ENCODE measurements at regions of chr11 and their contacts with region 1.

Region 1: GRCh38 chr11:62905927-62906531 is 15.1 kb downstream of the CHRM1 start:
- DNase-seq: peak; percentile 75 to 81 (median 76)
- H3K4me3 ChIP-seq: no peak overlapping the region
- H3K27ac ChIP-seq: no peak overlapping the region
- H3K4me1 ChIP-seq: peaks cover 0 to 8% (median 3%) of the 10 kb centered on the region in 4 experiments
- H3K27me3 ChIP-seq: peaks cover 0 to 22% (median 0%) of the 10 kb centered on the region in 5 experiments

Region 2: DNA sequence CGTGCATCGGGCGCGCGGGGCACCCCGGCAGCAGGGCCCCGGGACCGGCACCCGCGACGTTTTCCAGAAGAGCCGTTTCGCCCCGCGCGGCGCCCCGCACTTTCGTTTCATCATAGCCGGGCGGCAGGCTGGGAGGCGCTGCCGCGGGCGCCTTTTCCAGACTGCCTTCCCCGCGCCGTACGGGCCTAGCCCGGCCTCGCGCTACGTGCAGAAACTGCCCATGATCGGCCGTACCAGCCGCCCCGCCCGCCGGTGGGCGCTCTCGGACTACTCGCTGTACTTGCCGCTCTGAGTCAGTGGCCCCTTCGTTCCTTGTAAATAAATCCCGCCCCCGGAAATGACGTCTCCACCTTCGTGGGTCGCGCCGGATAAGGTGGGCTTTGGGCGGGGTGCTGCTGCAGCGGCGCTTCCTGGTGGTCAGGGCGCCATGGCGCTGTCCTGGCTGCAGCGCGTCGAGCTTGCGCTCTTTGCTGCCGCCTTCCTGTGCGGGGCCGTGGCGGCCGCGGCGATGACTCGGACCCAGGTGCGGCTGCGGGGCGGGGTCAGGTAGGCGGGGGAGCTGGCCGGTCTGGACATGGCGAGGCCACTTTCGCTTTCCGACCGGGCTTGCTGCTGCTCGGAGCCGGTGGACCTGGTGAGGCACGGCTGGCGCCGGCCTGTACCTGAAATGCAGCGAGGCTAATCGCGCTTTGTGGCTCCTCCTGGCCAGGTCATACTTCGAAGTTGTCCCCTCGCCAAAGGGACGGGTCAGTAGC is 118.8 kb before region 1 on chr11 and contains the start of gene TMEM179B:
- CTCF ChIA-PET with region 1: no interaction called
- POLR2A ChIA-PET with region 1: no interaction called
- DNase-seq: peak; percentile 98 to 99 (median 99)
- H3K4me3 ChIP-seq: peak within 1 kb of the TSS; percentile 75 to 100 (median 97)
- H3K27ac ChIP-seq: peak within 1 kb of the TSS; percentile 72 to 88
- H3K4me1 ChIP-seq: peaks cover 10 to 48% (median 40%) of the 10 kb centered on the region in 4 experiments
- H3K27me3 ChIP-seq: no peaks in the 10 kb centered on the region

Region 3: GRCh38 chr11:62922658-62923431 is 16.8 kb after region 1 on chr11:
- CTCF ChIA-PET with region 1: interaction called, 29 read pairs
- POLR2A ChIA-PET with region 1: no interaction called
- DNase-seq: peak in 2 of 3 donors; percentile 38 to 52
- H3K4me3 ChIP-seq: no peak overlapping the region
- H3K27ac ChIP-seq: no peak overlapping the region
- H3K4me1 ChIP-seq: peaks cover 0 to 25% (median 20%) of the 10 kb centered on the region in 4 experiments
- H3K27me3 ChIP-seq: peaks cover 6 to 82% (median 28%) of the 10 kb centered on the region in 5 experiments

Region 4: DNA sequence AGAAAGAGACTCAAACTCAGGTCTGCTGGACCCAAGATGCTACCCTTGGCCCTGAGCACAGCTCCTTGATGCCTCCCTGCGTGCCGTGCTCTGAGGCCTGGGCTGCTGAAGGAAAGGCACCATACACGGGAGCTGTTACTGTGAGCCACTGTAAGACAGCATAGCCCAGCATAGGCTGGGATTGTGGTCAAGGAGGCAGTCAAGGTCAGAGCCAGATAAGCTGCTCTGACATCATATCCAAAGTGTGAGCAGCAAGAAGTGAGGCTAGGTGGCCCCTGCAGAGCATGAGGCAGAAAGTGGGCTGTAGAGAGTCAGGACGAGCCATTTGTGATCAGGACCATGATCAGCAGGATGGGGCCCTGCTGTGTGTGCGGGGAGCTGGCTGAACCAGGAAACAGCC is 101.9 kb after region 1 on chr11:
- CTCF ChIA-PET with region 1: interaction called, 11 read pairs
- POLR2A ChIA-PET with region 1: no interaction called
- DNase-seq: no peak
- H3K4me3 ChIP-seq: no peak overlapping the region
- H3K27ac ChIP-seq: no peak overlapping the region
- H3K4me1 ChIP-seq: no peaks in the 10 kb centered on the region
- H3K27me3 ChIP-seq: peaks cover 0 to 11% (median 0%) of the 10 kb centered on the region in 5 experiments

Region 5: DNA sequence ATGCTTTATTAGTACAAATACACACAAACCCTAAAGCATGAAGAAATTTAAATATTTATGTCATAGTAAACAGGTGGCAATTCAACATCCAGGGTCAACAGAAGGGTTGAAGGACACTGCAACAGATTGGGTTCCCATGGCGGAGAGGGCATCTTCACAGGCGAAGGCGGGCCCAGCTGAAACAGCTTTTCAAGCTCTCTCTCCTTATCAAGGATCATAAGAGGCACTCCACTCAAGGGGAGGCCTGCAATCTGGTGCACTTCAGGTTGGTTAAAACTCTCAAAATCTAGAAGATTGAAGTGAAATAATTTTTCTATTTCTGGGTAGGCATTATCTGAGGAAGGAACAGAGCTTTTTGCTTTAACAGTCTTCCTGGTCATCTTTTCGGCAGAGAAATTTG is 126.4 kb after region 1 on chr11:
- CTCF ChIA-PET with region 1: interaction called, 14 read pairs
- POLR2A ChIA-PET with region 1: no interaction called
- DNase-seq: no peak
- H3K4me3 ChIP-seq: no peak overlapping the region
- H3K27ac ChIP-seq: no peak overlapping the region
- H3K4me1 ChIP-seq: no peaks in the 10 kb centered on the region
- H3K27me3 ChIP-seq: peaks cover 0 to 6% (median 3%) of the 10 kb centered on the region in 5 experiments

Measured in common myeloid progenitor, CD34-positive (primary cell).